Caco-2 (cell line): ENCODE measurements at regions of chr13 and their contacts with region 1.

Region 1: DNA sequence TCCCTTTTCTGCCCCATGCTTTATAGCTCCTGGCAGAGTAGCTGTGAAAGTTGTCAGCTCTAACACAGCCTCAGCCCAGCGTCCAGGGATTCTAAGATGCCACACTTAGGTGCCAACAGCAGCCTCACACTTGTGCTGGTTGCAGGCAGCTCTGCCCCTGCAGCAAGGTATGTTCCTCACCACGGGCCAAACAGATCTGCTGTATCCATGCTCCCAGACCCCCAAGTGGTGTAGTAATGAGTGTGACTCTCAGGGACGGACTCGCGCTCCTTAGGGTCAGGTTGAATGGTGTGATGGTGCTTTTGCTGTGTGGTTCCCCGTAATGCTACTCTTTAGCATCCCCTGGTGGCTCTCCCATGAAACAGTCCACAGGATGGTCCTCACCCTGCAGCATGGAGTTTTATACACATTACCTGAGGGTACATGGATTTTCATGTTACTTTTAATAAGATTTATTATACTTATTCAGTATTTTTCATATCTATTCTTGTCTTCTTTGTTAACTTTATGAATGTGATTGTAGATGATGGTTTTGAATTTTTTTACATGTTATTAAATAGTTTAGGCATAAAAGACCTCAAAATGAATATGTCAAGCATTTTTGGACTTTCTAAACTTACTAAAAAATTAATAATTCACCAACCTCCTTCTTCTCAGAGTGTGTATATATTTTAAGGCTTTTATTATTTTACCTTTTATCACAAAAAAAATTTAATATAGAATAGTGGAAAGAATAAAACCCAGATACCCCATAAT is 232.5 kb downstream of the SLC7A1 start:
- DNase-seq: peak in 1 of 2 experiments; percentile 71
- H3K4me3 ChIP-seq: no peak overlapping the region
- H3K4me3 Mint-ChIP-seq: no peak overlapping the region
- H3K27ac Mint-ChIP-seq: no peak overlapping the region
- H3K4me1 ChIP-seq: no peaks in the 10 kb centered on the region
- H3K4me1 Mint-ChIP-seq: no peaks in the 10 kb centered on the region
- H3K27me3 ChIP-seq: no peaks in the 10 kb centered on the region
- H3K27me3 Mint-ChIP-seq: peaks cover 17% of the 10 kb centered on the region
- CTCF ChIP-seq: peak; percentile 91 to 97

Region 2: GRCh38 chr13:28983641-28984040 is 379.4 kb before region 1 on chr13:
- CTCF ChIA-PET with region 1: no interaction called
- POLR2A ChIA-PET with region 1: no interaction called
- intact Hi-C with region 1: loop called (anchors 10 kb)
- DNase-seq: peak in 1 of 2 experiments; percentile 23
- H3K4me3 ChIP-seq: no peak overlapping the region
- H3K4me3 Mint-ChIP-seq: no peak overlapping the region
- H3K27ac Mint-ChIP-seq: no peak overlapping the region
- H3K4me1 ChIP-seq: peaks cover 19% of the 10 kb centered on the region
- H3K4me1 Mint-ChIP-seq: peaks cover 14% of the 10 kb centered on the region
- H3K27me3 ChIP-seq: no peaks in the 10 kb centered on the region
- H3K27me3 Mint-ChIP-seq: peaks cover 8% of the 10 kb centered on the region
- CTCF ChIP-seq: no peak

Region 3: GRCh38 chr13:29284726-29285125 is 78.3 kb before region 1 on chr13:
- CTCF ChIA-PET with region 1: no interaction called
- POLR2A ChIA-PET with region 1: no interaction called
- intact Hi-C with region 1: loop called (anchors 1 kb)
- DNase-seq: no peak
- H3K4me3 ChIP-seq: no peak overlapping the region
- H3K4me3 Mint-ChIP-seq: no peak overlapping the region
- H3K27ac Mint-ChIP-seq: no peak overlapping the region
- H3K4me1 ChIP-seq: no peaks in the 10 kb centered on the region
- H3K4me1 Mint-ChIP-seq: no peaks in the 10 kb centered on the region
- H3K27me3 ChIP-seq: no peaks in the 10 kb centered on the region; the same call in 1 of the 2 replicates
- H3K27me3 Mint-ChIP-seq: peaks cover 19% of the 10 kb centered on the region
- CTCF ChIP-seq: peak in 1 of 2 experiments; percentile 39

Region 4: GRCh38 chr13:29421118-29421517 is 58.1 kb after region 1 on chr13:
- CTCF ChIA-PET with region 1: no interaction called
- POLR2A ChIA-PET with region 1: no interaction called
- intact Hi-C with region 1: no loop called
- DNase-seq: no peak
- H3K4me3 ChIP-seq: no peak overlapping the region
- H3K4me3 Mint-ChIP-seq: no peak overlapping the region
- H3K27ac Mint-ChIP-seq: no peak overlapping the region
- H3K4me1 ChIP-seq: no peaks in the 10 kb centered on the region
- H3K4me1 Mint-ChIP-seq: no peaks in the 10 kb centered on the region
- H3K27me3 ChIP-seq: no peaks in the 10 kb centered on the region
- H3K27me3 Mint-ChIP-seq: peaks cover 3% of the 10 kb centered on the region
- CTCF ChIP-seq: no peak

Region 5: GRCh38 chr13:29595380-29596063 is 232.5 kb after region 1 on chr13 and contains the start of gene SLC7A1:
- CTCF ChIA-PET with region 1: no interaction called
- POLR2A ChIA-PET with region 1: no interaction called
- intact Hi-C with region 1: no loop called
- DNase-seq: peak; percentile 88 to 94
- H3K4me3 ChIP-seq: peak within 1 kb of the TSS; percentile 92
- H3K4me3 Mint-ChIP-seq: peak within 1 kb of the TSS; percentile 88
- H3K27ac Mint-ChIP-seq: peak within 1 kb of the TSS; percentile 91
- H3K4me1 ChIP-seq: peaks cover 11% of the 10 kb centered on the region
- H3K4me1 Mint-ChIP-seq: peaks cover 21% of the 10 kb centered on the region
- H3K27me3 ChIP-seq: 0 out of 2 replicates have a peak, but pooled peaks cover 1% of the 10 kb centered on the region
- H3K27me3 Mint-ChIP-seq: peaks cover 2% of the 10 kb centered on the region
- CTCF ChIP-seq: peak in 1 of 2 experiments; percentile 20
- total RNA-seq, gene SLC7A1: 164 and 180 TPM in 2 replicates